CD14-positive monocyte (primary cell): ENCODE measurements at regions of chr9 and their contacts with region 1.

Region 1: DNA sequence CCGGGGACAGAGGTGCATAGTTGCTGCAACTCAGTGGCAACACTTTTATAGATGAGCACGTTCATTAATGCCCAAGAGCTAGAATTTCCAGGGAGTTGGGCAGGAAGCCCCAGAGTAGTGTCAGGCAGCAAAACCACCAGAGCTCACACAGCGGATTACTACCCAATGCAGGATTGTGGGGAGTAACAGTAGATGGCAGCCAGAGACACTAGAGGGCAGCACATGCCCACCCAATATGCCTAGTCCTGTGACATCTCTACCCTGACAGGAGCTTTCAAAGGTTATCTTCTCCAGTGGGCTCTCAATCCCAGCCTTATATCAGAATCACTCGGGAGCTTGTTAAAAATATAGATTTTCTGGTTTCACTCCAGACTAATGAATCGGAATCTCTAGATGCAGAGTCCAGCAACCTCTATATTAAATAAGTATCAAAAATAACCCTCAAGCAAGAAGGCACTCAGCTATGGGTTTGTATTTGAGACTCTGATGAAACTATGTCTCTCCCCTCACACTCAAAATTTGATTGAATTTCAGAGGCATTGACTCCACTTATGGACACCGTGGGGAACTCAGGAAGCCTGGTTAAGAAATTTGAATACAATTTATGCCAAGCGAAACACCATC is 58.4 kb upstream of the PHF24 start:
- DNase-seq: peak; percentile 63 to 81 (median 74)
- H3K4me3 ChIP-seq: no peak overlapping the region
- H3K4me3 Mint-ChIP-seq: no peak overlapping the region
- H3K27ac ChIP-seq: no peak overlapping the region
- H3K27ac Mint-ChIP-seq: no peak overlapping the region
- H3K4me1 ChIP-seq: no peaks in the 10 kb centered on the region
- H3K4me1 Mint-ChIP-seq: no peaks in the 10 kb centered on the region
- H3K27me3 ChIP-seq: peaks cover 5 to 9% of the 10 kb centered on the region in 2 donors
- H3K27me3 Mint-ChIP-seq: peaks cover 11 to 30% (median 18%) of the 10 kb centered on the region in 3 donors
- CTCF ChIP-seq: peak; percentile 84

Region 2: GRCh38 chr9:34744295-34745221 is 155.1 kb before region 1 on chr9:
- intact Hi-C with region 1: no loop called
- DNase-seq: no peak
- H3K4me3 ChIP-seq: no peak overlapping the region
- H3K4me3 Mint-ChIP-seq: no peak overlapping the region
- H3K27ac ChIP-seq: no peak overlapping the region
- H3K27ac Mint-ChIP-seq: no peak overlapping the region
- H3K4me1 ChIP-seq: no peaks in the 10 kb centered on the region
- H3K4me1 Mint-ChIP-seq: peaks cover 5% of the 10 kb centered on the region
- H3K27me3 ChIP-seq: peaks cover 3% of the 10 kb centered on the region in 2 donors
- H3K27me3 Mint-ChIP-seq: peaks cover 6 to 14% (median 13%) of the 10 kb centered on the region in 3 donors
- CTCF ChIP-seq: no peak

Region 3: GRCh38 chr9:34989003-34989945 is 89.6 kb after region 1 on chr9 and contains the start of gene DNAJB5:
- intact Hi-C with region 1: loop called in 1 of 2 experiments (anchors 2 kb)
- DNase-seq: peak; percentile 99
- H3K4me3 ChIP-seq: peak within 1 kb of the TSS; percentile 71 to 86 (median 80)
- H3K4me3 Mint-ChIP-seq: peak within 1 kb of the TSS; percentile 92 to 96
- H3K27ac ChIP-seq: peak within 1 kb of the TSS; percentile 11 to 83
- H3K27ac Mint-ChIP-seq: peak within 1 kb of the TSS; percentile 79 to 97 (median 95)
- H3K4me1 ChIP-seq: peaks cover 45 to 60% of the 10 kb centered on the region in 2 donors
- H3K4me1 Mint-ChIP-seq: peaks cover 67% of the 10 kb centered on the region
- H3K27me3 ChIP-seq: peaks cover 0 to 10% of the 10 kb centered on the region in 2 donors
- H3K27me3 Mint-ChIP-seq: peaks cover 8 to 28% (median 24%) of the 10 kb centered on the region in 3 donors
- CTCF ChIP-seq: no peak
- polyA plus RNA-seq, gene DNAJB5: 0.66 to 1.9 (median 0.84) TPM

Region 4: DNA sequence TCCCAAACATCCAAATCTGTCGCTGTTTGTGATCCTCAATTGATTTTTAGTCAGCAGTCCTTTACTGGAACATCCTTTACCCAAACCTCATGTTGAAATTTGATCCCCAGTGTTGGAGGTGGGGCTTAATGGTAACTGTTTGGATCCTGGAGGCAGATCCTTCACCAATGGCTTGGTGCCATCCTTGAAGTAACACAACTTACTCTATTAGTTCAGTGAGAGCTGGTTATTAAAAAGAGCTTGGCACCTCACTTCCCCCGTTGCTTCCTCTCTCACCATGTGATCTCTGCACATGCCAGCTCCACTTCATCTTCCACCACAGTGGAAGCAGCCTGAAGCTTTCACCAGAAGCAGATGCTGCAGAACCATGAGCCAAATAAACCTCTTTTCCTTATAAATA is 130.2 kb after region 1 on chr9:
- intact Hi-C with region 1: no loop called
- DNase-seq: no peak
- H3K4me3 ChIP-seq: no peak overlapping the region
- H3K4me3 Mint-ChIP-seq: no peak overlapping the region
- H3K27ac ChIP-seq: no peak overlapping the region
- H3K27ac Mint-ChIP-seq: no peak overlapping the region
- H3K4me1 ChIP-seq: no peaks in the 10 kb centered on the region
- H3K4me1 Mint-ChIP-seq: peaks cover 6% of the 10 kb centered on the region
- H3K27me3 ChIP-seq: no peaks in the 10 kb centered on the region
- H3K27me3 Mint-ChIP-seq: peaks cover 0 to 5% (median 0%) of the 10 kb centered on the region in 3 donors
- CTCF ChIP-seq: no peak

Region 5: DNA sequence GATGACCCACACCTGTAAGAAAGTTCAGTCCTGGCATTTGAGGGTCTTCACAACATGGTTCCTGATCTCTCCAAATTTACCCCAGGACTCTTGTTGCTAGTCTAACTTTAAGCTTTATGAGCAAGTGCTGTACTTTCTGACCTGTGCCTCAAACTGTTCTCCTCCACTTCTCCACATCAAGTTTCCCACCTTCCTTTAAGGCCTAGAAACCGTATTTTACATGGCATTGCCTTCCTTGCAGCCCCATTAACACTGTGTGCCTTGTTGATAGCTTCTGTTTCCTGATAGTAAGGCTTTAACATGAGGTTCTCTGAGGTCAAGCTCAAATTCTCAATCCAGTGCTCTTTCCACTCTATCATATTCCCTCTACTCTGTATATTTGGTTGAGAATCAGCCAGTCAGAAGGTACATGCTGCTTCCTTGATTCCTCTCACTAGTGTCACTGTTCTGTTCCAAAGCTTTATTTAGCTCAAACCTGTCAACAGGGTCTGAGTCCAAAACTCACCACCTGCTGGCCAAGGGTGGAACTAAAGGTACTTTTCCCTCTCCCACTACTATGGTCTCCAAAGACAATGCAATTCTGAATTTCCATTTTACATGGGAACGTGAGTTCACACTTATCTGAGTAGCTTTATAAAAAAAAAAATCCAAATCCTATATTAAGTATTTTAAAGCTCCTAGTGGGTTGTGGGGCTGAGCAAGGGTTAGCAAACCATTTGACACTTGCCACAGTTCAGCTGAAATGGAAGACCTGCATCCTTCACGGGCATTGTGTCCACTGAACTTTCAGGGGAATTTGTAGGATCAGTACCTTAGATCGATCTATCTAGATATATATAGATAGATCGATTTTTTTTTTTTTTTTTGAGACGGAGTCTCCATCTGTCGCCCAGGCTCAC is 151.7 kb after region 1 on chr9:
- intact Hi-C with region 1: loop called in 1 of 2 experiments (anchors 2 kb)
- DNase-seq: peak; percentile 11 to 32 (median 28)
- H3K4me3 ChIP-seq: no peak overlapping the region
- H3K4me3 Mint-ChIP-seq: no peak overlapping the region
- H3K27ac ChIP-seq: no peak overlapping the region
- H3K27ac Mint-ChIP-seq: no peak overlapping the region
- H3K4me1 ChIP-seq: no peaks in the 10 kb centered on the region
- H3K4me1 Mint-ChIP-seq: no peaks in the 10 kb centered on the region
- H3K27me3 ChIP-seq: no peaks in the 10 kb centered on the region
- H3K27me3 Mint-ChIP-seq: no peaks in the 10 kb centered on the region
- CTCF ChIP-seq: peak; percentile 70

Region 6: GRCh38 chr9:35096035-35096849 is 196.6 kb after region 1 on chr9 and contains the start of gene PIGO:
- intact Hi-C with region 1: loop called (anchors 5 kb)
- DNase-seq: peak; percentile 81 to 85 (median 81)
- H3K4me3 ChIP-seq: peak within 1 kb of the TSS; percentile 84 to 100 (median 96)
- H3K4me3 Mint-ChIP-seq: peak within 1 kb of the TSS; percentile 82 to 85
- H3K27ac ChIP-seq: peak within 1 kb of the TSS; percentile 87 to 99
- H3K27ac Mint-ChIP-seq: peak within 1 kb of the TSS; percentile 83 to 93 (median 89)
- H3K4me1 ChIP-seq: peaks cover 12 to 17% of the 10 kb centered on the region in 2 donors
- H3K4me1 Mint-ChIP-seq: peaks cover 24% of the 10 kb centered on the region
- H3K27me3 ChIP-seq: no peaks in the 10 kb centered on the region
- H3K27me3 Mint-ChIP-seq: no peaks in the 10 kb centered on the region
- CTCF ChIP-seq: peak; percentile 95
- polyA plus RNA-seq, gene PIGO: 15.7 to 19.1 (median 17.3) TPM

Region 7: GRCh38 chr9:35481347-35481975 is 581.8 kb after region 1 on chr9:
- intact Hi-C with region 1: loop called (anchors 5 kb)
- DNase-seq: peak; percentile 38 to 54 (median 40)
- H3K4me3 ChIP-seq: no peak overlapping the region
- H3K4me3 Mint-ChIP-seq: no peak overlapping the region
- H3K27ac ChIP-seq: no peak overlapping the region
- H3K27ac Mint-ChIP-seq: peak overlapping the region in 2 of 7 donors; percentile 42 to 61
- H3K4me1 ChIP-seq: no peaks in the 10 kb centered on the region
- H3K4me1 Mint-ChIP-seq: no peaks in the 10 kb centered on the region
- H3K27me3 ChIP-seq: peaks cover 0 to 3% of the 10 kb centered on the region in 2 donors
- H3K27me3 Mint-ChIP-seq: peaks cover 0 to 6% (median 2%) of the 10 kb centered on the region in 3 donors
- CTCF ChIP-seq: peak; percentile 77